ENCODE measurements at regions of chr5 and their contacts with region 1.

Region 1: DNA sequence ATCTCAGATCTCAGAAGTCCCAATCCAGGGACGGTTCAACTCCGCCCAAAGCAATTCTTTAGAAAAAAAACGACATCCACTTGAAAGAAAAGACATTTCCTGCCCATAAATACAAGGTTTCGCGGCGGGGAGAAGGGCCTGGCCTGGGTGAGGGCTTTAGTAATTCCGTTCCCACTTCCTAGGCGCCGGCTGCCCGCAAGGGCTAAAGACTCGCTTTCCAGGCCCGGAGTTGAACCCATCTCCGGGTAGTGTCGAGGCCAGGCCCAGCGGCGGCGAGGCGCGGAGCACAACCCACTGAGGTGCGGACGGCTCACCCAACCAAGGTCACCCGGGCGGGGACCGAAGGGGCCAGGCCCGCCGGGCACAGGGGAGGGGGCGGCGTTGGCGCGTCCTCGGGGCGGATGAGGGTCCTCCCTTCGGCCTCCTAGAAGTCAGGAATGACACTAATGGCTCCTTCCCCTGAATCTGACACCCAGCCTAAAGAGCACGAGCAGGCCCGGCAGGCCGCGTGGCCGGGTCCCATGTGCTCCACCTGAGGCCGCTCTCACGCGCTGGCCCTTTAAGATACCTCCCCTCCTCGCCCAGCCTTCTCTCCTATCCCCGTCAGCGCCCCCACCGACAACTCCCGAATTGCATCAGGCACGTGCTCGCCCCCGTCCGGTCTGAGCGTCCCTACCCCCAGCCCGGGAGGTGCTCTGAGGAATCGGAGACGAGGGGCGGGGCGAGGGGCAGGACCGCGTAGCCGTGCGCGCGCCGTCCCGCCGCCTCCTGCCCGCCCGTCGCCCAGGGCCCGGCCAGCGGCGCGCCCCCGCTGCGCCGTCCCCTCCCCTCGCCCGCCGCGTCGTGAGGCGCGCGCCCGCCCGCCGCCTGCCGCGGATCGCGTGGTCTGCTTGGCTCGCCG is 467 bp upstream of the LARP1 start:
- DNase-seq: peak; percentile 99
- H3K4me3 Mint-ChIP-seq: peak overlapping the region; percentile 89
- H3K27ac Mint-ChIP-seq: peak overlapping the region; percentile 99
- H3K4me1 Mint-ChIP-seq: peaks cover 33% of the 10 kb centered on the region
- H3K27me3 Mint-ChIP-seq: no peaks in the 10 kb centered on the region

Region 2: GRCh38 chr5:154196955-154197652 is 557.6 kb before region 1 on chr5:
- CTCF ChIA-PET with region 1: no interaction called
- POLR2A ChIA-PET with region 1: no interaction called
- intact Hi-C with region 1: loop called (anchors 5 kb)
- DNase-seq: no peak
- H3K4me3 Mint-ChIP-seq: no peak overlapping the region
- H3K27ac Mint-ChIP-seq: peak overlapping the region; percentile 65
- H3K4me1 Mint-ChIP-seq: peaks cover 71% of the 10 kb centered on the region
- H3K27me3 Mint-ChIP-seq: no peaks in the 10 kb centered on the region

Region 3: GRCh38 chr5:154683101-154683880 is 71.4 kb before region 1 on chr5:
- CTCF ChIA-PET with region 1: no interaction called
- POLR2A ChIA-PET with region 1: no interaction called
- intact Hi-C with region 1: loop called (anchors 1 kb)
- DNase-seq: no peak
- H3K4me3 Mint-ChIP-seq: peak overlapping the region; percentile 32
- H3K27ac Mint-ChIP-seq: no peak overlapping the region
- H3K4me1 Mint-ChIP-seq: peaks cover 6% of the 10 kb centered on the region
- H3K27me3 Mint-ChIP-seq: peaks cover 6% of the 10 kb centered on the region

Region 4: GRCh38 chr5:154811653-154812365 is 57.1 kb after region 1 on chr5:
- CTCF ChIA-PET with region 1: no interaction called
- POLR2A ChIA-PET with region 1: no interaction called
- intact Hi-C with region 1: loop called (anchors 2 kb)
- DNase-seq: peak; percentile 75
- H3K4me3 Mint-ChIP-seq: no peak overlapping the region
- H3K27ac Mint-ChIP-seq: no peak overlapping the region
- H3K4me1 Mint-ChIP-seq: peaks cover 15% of the 10 kb centered on the region
- H3K27me3 Mint-ChIP-seq: no peaks in the 10 kb centered on the region

Region 5: GRCh38 chr5:154940772-154941620 is 186.3 kb after region 1 on chr5 and contains the start of gene MRPL22:
- CTCF ChIA-PET with region 1: no interaction called
- POLR2A ChIA-PET with region 1: no interaction called
- intact Hi-C with region 1: loop called (anchors 1 kb)
- DNase-seq: peak; percentile 97
- H3K4me3 Mint-ChIP-seq: peak within 1 kb of the TSS; percentile 96
- H3K27ac Mint-ChIP-seq: peak within 1 kb of the TSS; percentile 93
- H3K4me1 Mint-ChIP-seq: peaks cover 35% of the 10 kb centered on the region
- H3K27me3 Mint-ChIP-seq: no peaks in the 10 kb centered on the region
- total RNA-seq, gene MRPL22: 80.8 to 82.2 TPM